ENCODE measurements at regions of chr3 and their contacts with region 1.

Region 1: GRCh38 chr3:52056968-52057805 is 816 bp upstream of the DUSP7 start:
- DNase-seq: peak; percentile 99 to 100
- H3K4me3 ChIP-seq: peak overlapping the region; percentile 7 to 55 (median 12)
- H3K27ac ChIP-seq: peak overlapping the region; percentile 31 to 71 (median 67)
- H3K4me1 ChIP-seq: peaks cover 31 to 35% of the 10 kb centered on the region in 2 donors
- H3K27me3 ChIP-seq: no peaks in the 10 kb centered on the region
- CTCF ChIP-seq: peak in 2 of 6 experiments; percentile 7 to 36
- POLR2A ChIP-seq: peak in 1 of 2 donors; percentile 65

Region 2: GRCh38 chr3:51941798-51942602 is 115.2 kb before region 1 on chr3 and contains the starts of genes PARP3 and RRP9:
- intact Hi-C with region 1: loop called (anchors 5 kb)
- DNase-seq: peak; percentile 100
- H3K4me3 ChIP-seq: peak within 1 kb of the TSS; percentile 32 to 51 (median 39)
- H3K27ac ChIP-seq: peak within 1 kb of the TSS; percentile 81 to 96 (median 90)
- H3K4me1 ChIP-seq: peaks cover 23 to 24% of the 10 kb centered on the region in 2 donors
- H3K27me3 ChIP-seq: no peaks in the 10 kb centered on the region
- CTCF ChIP-seq: peak; percentile 97 to 100 (median 100)
- POLR2A ChIP-seq: peak; percentile 61 to 84
- total RNA-seq, gene PARP3: 32.1 to 50.8 (median 47.1) TPM
- total RNA-seq, gene RRP9: 7.3 to 14.4 (median 11.9) TPM

Region 3: DNA sequence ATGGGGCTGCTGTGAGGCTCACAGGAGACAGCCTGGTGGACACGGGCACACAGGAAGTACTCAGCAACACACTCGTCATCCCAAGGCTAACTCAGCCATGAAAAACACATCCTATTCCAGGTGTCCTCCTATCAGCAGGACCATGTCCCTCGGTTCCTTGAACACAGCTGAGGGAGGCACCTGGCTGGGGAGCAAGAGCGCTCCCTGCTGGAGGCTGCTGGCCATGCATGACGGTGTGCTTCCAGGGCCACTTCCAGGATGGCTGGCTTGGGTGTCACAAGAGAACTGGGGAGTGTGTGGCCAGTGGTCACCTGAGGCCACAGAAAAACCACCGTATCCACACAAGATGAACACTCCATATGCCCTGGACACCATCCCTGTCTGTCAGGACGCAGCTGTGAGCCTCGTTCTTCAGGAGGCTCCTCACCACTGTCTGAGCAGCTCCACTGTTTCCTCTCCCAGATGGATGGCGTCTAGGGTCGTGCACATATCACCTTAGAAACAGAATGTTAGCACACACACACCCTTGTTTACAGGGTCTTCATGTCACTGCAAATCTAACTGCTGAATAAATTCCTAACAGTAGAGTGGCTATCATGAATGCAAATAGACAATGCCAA is 66.0 kb after region 1 on chr3:
- intact Hi-C with region 1: loop called (anchors 5 kb)
- DNase-seq: peak; percentile 74 to 77
- H3K4me3 ChIP-seq: no peak overlapping the region
- H3K27ac ChIP-seq: no peak overlapping the region
- H3K4me1 ChIP-seq: peaks cover 0 to 25% of the 10 kb centered on the region in 2 donors
- H3K27me3 ChIP-seq: no peaks in the 10 kb centered on the region
- CTCF ChIP-seq: peak; percentile 77 to 94 (median 93)
- POLR2A ChIP-seq: no peak

Region 4: DNA sequence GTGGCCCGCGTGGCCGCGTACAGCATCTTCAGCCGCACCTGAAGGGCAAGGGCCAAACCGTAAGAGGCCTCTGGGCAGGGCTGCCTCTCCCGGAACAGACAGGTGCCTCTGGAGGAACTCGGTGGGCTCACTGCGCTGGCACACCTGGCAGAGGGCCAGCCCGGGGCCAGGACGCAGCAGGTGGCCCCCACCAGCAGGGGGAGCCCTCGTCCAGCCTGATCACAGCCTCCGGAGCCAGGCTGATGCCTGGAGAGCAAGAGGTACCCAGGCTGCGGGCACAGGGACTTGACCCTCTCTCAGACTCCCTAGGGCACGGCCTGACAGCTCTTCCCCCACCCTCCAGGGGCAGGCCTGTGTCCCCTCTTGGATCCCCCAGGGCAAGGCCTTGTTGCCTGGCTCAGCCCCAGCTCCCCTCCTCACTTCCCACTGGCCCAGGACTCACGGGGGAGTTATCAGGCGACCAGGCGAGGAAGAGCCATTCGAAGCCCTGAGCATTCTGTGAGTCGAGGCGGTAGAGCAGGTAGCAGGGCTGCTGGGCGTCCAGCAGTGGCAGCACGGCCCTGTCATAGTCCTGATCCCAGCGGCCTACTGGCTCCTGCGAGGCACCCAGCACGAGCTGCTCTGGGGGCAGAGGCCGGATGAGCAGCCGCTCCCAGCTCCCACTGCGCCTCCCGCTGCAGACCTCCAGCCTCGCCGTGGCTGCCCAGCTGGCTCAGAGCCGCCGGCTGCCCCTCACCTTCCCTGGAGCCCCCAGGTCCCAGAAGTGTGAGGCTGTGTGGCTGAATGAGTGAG is 174.5 kb after region 1 on chr3:
- intact Hi-C with region 1: no loop called
- DNase-seq: peak; percentile 60 to 72
- H3K4me3 ChIP-seq: no peak overlapping the region
- H3K27ac ChIP-seq: no peak overlapping the region
- H3K4me1 ChIP-seq: peaks cover 3 to 6% of the 10 kb centered on the region in 2 donors
- H3K27me3 ChIP-seq: no peaks in the 10 kb centered on the region
- CTCF ChIP-seq: peak; percentile 63 to 82 (median 78)
- POLR2A ChIP-seq: no peak

Region 5: GRCh38 chr3:52536369-52537164 is 479.4 kb after region 1 on chr3 and contains the start of gene UQCC5:
- intact Hi-C with region 1: loop called (anchors 5 kb)
- DNase-seq: peak; percentile 99
- H3K4me3 ChIP-seq: peak within 1 kb of the TSS; percentile 49 to 68 (median 51)
- H3K27ac ChIP-seq: peak within 1 kb of the TSS; percentile 92 to 94 (median 93)
- H3K4me1 ChIP-seq: peaks cover 48 to 76% of the 10 kb centered on the region in 2 donors
- H3K27me3 ChIP-seq: no peaks in the 10 kb centered on the region
- CTCF ChIP-seq: no peak
- POLR2A ChIP-seq: peak; percentile 73 to 99
- total RNA-seq, gene UQCC5: 4.8 to 34.3 (median 9.4) TPM